Ascending aorta (tissue), 2 donors: ENCODE measurements at regions of chr19 and their contacts with region 1.

Region 1: GRCh38 chr19:47112997-47113849 is at the start of gene ZC3H4:
- DNase-seq: peak; percentile 98 to 99
- H3K4me3 ChIP-seq: peak within 1 kb of the TSS; percentile 87 to 97
- H3K27ac ChIP-seq: peak within 1 kb of the TSS; percentile 100
- H3K4me1 ChIP-seq: peaks cover 0 to 12% of the 10 kb centered on the region in 2 donors
- H3K27me3 ChIP-seq: no peaks in the 10 kb centered on the region
- CTCF ChIP-seq: no peak
- total RNA-seq, gene ZC3H4: 24.6 TPM

Region 2: DNA sequence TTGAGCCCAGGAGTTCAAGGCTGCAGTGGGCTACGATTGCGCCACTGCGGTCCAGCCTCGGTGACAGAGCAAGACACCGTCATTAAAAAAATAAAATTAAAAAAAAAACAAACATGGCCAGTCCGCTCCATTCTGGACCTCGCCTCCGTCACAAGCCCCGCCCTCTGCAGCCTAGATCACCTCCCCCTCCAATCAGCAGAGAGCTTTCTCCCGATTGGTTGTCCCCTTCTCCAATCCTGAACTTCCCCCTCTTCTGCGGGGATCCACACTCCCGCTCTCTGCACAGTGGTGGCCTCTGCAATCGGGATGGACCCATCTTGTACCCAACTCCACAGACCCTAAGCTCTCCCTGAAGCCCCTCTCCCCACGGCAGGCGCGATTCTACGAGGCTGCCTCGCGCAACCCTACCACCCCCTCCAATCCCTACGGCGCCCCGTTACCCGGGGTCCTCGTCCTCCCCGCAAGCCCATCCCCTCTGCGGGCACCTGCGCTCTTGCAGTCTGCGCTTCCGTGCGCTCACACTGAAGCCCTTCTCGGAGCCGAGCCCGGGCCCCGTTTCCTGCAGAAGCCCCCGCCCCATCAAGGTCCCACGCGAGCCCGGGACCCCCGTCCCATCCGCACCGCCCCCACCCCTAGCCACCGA is 65.3 kb before region 1 on chr19:
- intact Hi-C with region 1: loop called (anchors 1 kb)
- DNase-seq: peak; percentile 58 to 89
- H3K4me3 ChIP-seq: peak overlapping the region; percentile 77 to 83
- H3K27ac ChIP-seq: peak overlapping the region; percentile 80
- H3K4me1 ChIP-seq: peaks cover 0 to 4% of the 10 kb centered on the region in 2 donors
- H3K27me3 ChIP-seq: no peaks in the 10 kb centered on the region
- CTCF ChIP-seq: no peak

Region 3: GRCh38 chr19:47081111-47081510 is 32.1 kb before region 1 on chr19:
- intact Hi-C with region 1: no loop called
- DNase-seq: no peak
- H3K4me3 ChIP-seq: no peak overlapping the region
- H3K27ac ChIP-seq: peak overlapping the region; percentile 15 to 79
- H3K4me1 ChIP-seq: peaks cover 3% of the 10 kb centered on the region in 2 donors
- H3K27me3 ChIP-seq: no peaks in the 10 kb centered on the region
- CTCF ChIP-seq: no peak

Region 4: GRCh38 chr19:47130591-47131227 is 17.5 kb after region 1 on chr19 and contains the start of gene SAE1:
- intact Hi-C with region 1: loop called (anchors 1 kb)
- DNase-seq: peak; percentile 86 to 98
- H3K4me3 ChIP-seq: peak within 1 kb of the TSS; percentile 71 to 80
- H3K27ac ChIP-seq: peak within 1 kb of the TSS; percentile 85 to 94
- H3K4me1 ChIP-seq: peaks cover 0 to 5% of the 10 kb centered on the region in 2 donors
- H3K27me3 ChIP-seq: no peaks in the 10 kb centered on the region
- CTCF ChIP-seq: peak; percentile 43 to 59 (median 53)
- total RNA-seq, gene SAE1: 54.4 TPM

Region 5: GRCh38 chr19:47225746-47226425 is 112.7 kb after region 1 on chr19:
- intact Hi-C with region 1: no loop called
- DNase-seq: peak in 1 of 2 donors; percentile 92
- H3K4me3 ChIP-seq: peak overlapping the region; percentile 88 to 91
- H3K27ac ChIP-seq: peak overlapping the region; percentile 100
- H3K4me1 ChIP-seq: peaks cover 12 to 24% of the 10 kb centered on the region in 2 donors
- H3K27me3 ChIP-seq: no peaks in the 10 kb centered on the region
- CTCF ChIP-seq: peak in 2 of 3 experiments; percentile 19 to 77